ENCODE measurements at regions of chr17 and their contacts with region 1.

Region 1: DNA sequence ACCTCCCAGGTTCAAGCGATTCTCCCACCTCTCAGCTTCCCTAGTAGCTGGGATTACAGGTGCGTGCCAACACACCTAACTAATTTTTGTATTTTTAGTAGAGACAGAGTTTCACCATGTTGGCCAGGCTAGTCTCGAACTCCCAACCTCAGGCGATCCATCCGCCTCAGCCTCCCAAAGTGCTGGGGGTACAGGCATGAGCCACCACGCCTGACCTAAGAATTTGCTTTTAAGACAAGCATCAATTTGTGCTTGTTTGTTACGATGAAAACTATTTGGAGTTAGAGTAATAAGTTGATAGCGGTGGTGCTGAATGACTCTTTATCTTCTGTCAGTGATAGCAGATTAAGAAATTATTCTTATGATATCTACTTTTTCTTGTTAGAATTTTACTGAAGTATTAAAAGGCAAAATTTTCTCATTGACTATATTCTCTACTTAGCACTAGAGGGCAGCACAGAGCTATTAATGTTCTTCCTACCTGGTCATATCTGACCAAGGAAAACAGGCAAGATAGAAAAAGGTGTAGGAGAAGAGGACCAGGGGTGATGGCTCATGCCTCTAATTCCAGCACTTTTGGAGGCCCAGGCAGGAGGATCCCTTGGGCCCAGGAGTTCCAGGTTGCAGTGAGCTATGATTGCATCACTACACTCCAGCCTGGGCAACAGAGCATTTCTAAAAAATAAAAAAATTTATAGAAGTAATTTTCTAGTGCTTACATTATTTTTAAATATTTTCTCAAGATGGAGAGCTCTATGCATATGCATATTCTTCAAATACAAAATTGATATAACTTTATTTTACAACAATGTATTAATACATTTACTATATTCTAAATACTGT is 24.5 kb downstream of the STXBP4 start:
- DNase-seq: no peak
- H3K4me3 ChIP-seq: no peak overlapping the region
- CTCF ChIP-seq: peak in 1 of 3 donors; percentile 56
- POLR2A ChIP-seq: no peak

Region 2: DNA sequence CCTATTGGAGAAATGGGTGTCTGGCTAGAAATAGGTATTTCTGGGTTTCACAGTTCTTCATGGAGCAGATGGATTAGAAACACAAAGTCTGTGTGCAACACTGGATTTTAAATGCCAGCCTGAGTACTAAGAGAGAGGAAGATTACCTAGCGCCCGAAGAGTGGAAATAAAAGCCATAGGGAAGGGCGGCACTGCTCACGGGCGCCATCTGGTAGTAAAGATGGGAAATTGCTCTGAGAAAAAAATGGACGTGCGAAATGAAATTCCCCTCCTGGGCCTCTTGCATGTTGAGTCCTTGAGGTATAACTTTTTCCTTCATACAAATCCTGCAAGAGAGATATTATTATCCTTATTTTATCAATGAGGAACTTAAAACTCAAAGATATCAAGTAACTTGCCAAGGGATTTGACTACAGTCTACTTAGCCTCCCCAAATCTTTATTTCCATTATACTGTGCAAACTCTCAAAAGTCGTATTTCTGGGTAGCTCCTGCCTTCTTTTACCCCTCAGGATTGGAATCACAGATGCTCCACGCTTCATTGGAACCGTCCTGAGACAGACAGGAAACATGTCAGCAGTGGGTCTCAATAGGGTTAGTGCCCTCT is 355.8 kb after region 1 on chr17:
- intact Hi-C with region 1: loop called (anchors 5 kb)
- DNase-seq: peak in 1 of 2 donors; percentile 87
- H3K4me3 ChIP-seq: no peak overlapping the region
- CTCF ChIP-seq: no peak
- POLR2A ChIP-seq: no peak

Region 3: GRCh38 chr17:55356434-55357328 is 363.7 kb after region 1 on chr17:
- intact Hi-C with region 1: loop called (anchors 5 kb)
- DNase-seq: peak; percentile 74 to 87
- H3K4me3 ChIP-seq: no peak overlapping the region
- CTCF ChIP-seq: no peak
- POLR2A ChIP-seq: no peak

Region 4: GRCh38 chr17:55513885-55514591 is 521.0 kb after region 1 on chr17:
- intact Hi-C with region 1: loop called (anchors 5 kb)
- DNase-seq: peak; percentile 75 to 89
- H3K4me3 ChIP-seq: no peak overlapping the region
- CTCF ChIP-seq: no peak
- POLR2A ChIP-seq: no peak